ENCODE measurements at regions of chr1 and their contacts with region 1.

Region 1: DNA sequence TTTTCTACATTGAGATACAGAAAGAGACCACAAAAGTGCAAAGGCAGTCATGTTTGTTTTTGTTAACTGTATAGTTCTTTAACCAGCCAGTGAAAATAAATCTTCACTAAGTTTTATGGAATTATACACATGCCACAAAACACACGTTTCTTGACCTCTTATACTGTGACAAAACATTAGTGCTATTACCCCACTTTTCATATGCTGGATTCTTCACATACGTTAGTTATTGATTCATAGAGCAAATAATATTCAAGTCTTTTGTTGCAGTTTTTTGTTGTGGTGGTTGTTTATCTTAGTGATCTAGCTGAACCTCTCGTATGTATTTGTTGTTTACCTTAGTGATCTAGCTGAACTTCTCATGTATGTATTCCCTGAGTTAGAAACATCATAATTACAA is 28.0 kb downstream of the LYPLAL1 start:
- DNase-seq: no peak
- H3K4me3 Mint-ChIP-seq: no peak overlapping the region
- H3K27ac Mint-ChIP-seq: no peak overlapping the region
- H3K4me1 Mint-ChIP-seq: no peaks in the 10 kb centered on the region
- H3K27me3 Mint-ChIP-seq: no peaks in the 10 kb centered on the region

Region 2: DNA sequence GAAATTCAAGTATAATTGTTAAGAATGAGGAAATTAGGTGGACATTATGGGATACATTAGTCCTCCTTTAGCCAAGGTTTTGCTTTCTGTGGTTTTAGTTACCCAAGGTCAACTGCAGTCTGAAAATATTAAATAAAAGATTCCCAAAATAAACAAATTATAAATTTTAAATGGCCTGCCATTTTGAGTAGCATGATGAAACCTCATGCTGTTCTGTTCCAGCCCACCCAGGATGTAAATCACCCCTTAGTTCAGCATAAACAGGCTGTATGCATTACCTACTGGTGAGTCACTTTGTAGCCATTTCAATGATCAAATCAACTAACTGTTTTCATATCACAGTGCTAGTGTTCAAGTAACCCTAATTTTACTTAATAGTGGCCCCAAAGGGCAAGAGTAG is 160.5 kb before region 1 on chr1:
- intact Hi-C with region 1: no loop called
- DNase-seq: no peak
- H3K4me3 Mint-ChIP-seq: no peak overlapping the region
- H3K27ac Mint-ChIP-seq: no peak overlapping the region
- H3K4me1 Mint-ChIP-seq: no peaks in the 10 kb centered on the region
- H3K27me3 Mint-ChIP-seq: no peaks in the 10 kb centered on the region

Region 3: GRCh38 chr1:219416594-219417238 is 215.1 kb after region 1 on chr1:
- intact Hi-C with region 1: loop called (anchors 5 kb)
- DNase-seq: peak; percentile 85
- H3K4me3 Mint-ChIP-seq: no peak overlapping the region
- H3K27ac Mint-ChIP-seq: no peak overlapping the region
- H3K4me1 Mint-ChIP-seq: no peaks in the 10 kb centered on the region
- H3K27me3 Mint-ChIP-seq: no peaks in the 10 kb centered on the region

Region 4: GRCh38 chr1:219812491-219813203 is 611.0 kb after region 1 on chr1:
- intact Hi-C with region 1: loop called (anchors 5 kb)
- DNase-seq: peak; percentile 62
- H3K4me3 Mint-ChIP-seq: no peak overlapping the region
- H3K27ac Mint-ChIP-seq: no peak overlapping the region
- H3K4me1 Mint-ChIP-seq: no peaks in the 10 kb centered on the region
- H3K27me3 Mint-ChIP-seq: peaks cover 5% of the 10 kb centered on the region

Measured in activated CD4-positive, alpha-beta T cell treated with anti-CD3 and anti-CD28 coated beads, Interleukin-2, amount 10 ng/mL, durations not matched to agents 24 days and 14 days (primary cell).